Common myeloid progenitor, CD34-positive (primary cell): ENCODE measurements at regions of chr14 and their contacts with region 1.

Region 1: DNA sequence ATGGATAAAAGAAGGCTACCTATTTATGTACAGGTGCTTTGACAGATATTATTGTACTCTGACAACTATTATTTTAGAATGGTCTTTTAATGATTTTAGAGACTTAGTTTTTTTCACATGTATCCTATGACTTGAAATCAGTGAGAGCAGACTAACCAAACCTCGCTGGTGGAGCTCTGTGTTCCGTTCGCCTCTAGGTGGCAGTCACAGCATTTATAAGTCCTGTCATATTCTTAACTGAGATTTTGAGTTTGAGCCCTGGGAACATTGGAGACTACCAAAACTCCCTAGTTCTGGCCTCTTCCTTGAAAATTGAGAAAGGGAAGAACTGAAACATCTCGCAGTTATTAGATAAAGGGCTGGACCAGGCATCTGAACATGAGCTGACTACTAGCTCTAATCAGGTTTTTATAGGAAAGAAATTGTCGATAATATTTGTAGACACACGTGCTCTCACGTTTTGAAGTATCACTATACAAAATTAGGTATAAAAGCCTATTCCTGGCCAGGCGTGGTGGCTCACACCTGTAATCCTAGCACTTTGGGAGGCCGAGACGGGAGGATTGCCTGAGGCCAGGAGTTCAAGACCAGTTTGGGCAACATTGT is 48.3 kb downstream of the TTLL5 start:
- DNase-seq: peak; percentile 77 to 89 (median 84)
- H3K4me3 ChIP-seq: no peak overlapping the region
- H3K27ac ChIP-seq: no peak overlapping the region
- H3K4me1 ChIP-seq: no peaks in the 10 kb centered on the region
- H3K27me3 ChIP-seq: no peaks in the 10 kb centered on the region

Region 2: GRCh38 chr14:75631453-75631831 is 77.9 kb before region 1 on chr14:
- CTCF ChIA-PET with region 1: no interaction called
- POLR2A ChIA-PET with region 1: no interaction called
- DNase-seq: no peak
- H3K4me3 ChIP-seq: no peak overlapping the region
- H3K27ac ChIP-seq: no peak overlapping the region
- H3K4me1 ChIP-seq: no peaks in the 10 kb centered on the region
- H3K27me3 ChIP-seq: no peaks in the 10 kb centered on the region

Region 3: DNA sequence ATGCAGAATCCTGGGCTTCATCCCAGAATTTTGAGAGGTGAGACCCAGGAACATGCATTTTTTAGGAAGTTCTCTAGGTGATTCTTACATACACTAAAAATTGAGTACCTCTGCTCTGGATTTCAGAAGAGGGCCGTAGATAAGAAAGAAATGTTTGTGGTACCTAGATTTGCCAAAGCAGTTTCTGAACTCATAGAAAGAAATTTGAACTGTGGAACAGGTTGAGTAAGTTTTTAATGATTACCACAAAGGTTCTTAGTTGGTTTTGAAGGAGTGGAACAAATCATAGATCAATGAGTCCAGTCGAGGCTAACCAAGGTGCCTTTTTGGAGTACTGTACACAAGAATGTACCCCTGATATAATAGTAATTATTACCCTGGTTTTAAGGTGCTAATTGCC is 23.4 kb before region 1 on chr14:
- CTCF ChIA-PET with region 1: interaction called, 11 read pairs
- POLR2A ChIA-PET with region 1: no interaction called
- DNase-seq: no peak
- H3K4me3 ChIP-seq: no peak overlapping the region
- H3K27ac ChIP-seq: no peak overlapping the region
- H3K4me1 ChIP-seq: no peaks in the 10 kb centered on the region
- H3K27me3 ChIP-seq: no peaks in the 10 kb centered on the region

Region 4: GRCh38 chr14:75982266-75983018 is 273.1 kb after region 1 on chr14:
- CTCF ChIA-PET with region 1: interaction called, 147 read pairs
- POLR2A ChIA-PET with region 1: no interaction called
- DNase-seq: peak; percentile 75 to 81 (median 79)
- H3K4me3 ChIP-seq: peak overlapping the region; percentile 63 to 89 (median 78)
- H3K27ac ChIP-seq: peak overlapping the region in 1 of 2 experiments; percentile 62
- H3K4me1 ChIP-seq: peaks cover 6 to 49% (median 40%) of the 10 kb centered on the region in 4 experiments
- H3K27me3 ChIP-seq: peaks cover 0 to 2% (median 0%) of the 10 kb centered on the region in 5 experiments

Region 5: GRCh38 chr14:76352639-76353281 is 643.5 kb after region 1 on chr14:
- CTCF ChIA-PET with region 1: interaction called, 12 read pairs
- POLR2A ChIA-PET with region 1: no interaction called
- DNase-seq: peak; percentile 54 to 69 (median 68)
- H3K4me3 ChIP-seq: peak overlapping the region in 3 of 7 experiments; percentile 21 to 57 (median 43)
- H3K27ac ChIP-seq: no peak overlapping the region
- H3K4me1 ChIP-seq: peaks cover 0 to 4% (median 1%) of the 10 kb centered on the region in 4 experiments
- H3K27me3 ChIP-seq: peaks cover 0 to 65% (median 13%) of the 10 kb centered on the region in 5 experiments